Activated T-helper 1 cell treated with anti-CD3 and anti-CD28 coated beads, Interleukin-12 subunit alpha, Interleukin-12 subunit beta, Interleukin-2, Interleukin-4 antibody, amounts not matched to agents 30 ng/mL and 10 ng/mL and 1 ng/mL, durations not matched to agents 14 hours and 24 hours and 36 hours (primary cell): ENCODE measurements at regions of chr15 and their contacts with region 1.

Region 1: GRCh38 chr15:89087830-89088604 is at the start of gene ABHD2:
- DNase-seq: peak; percentile 98
- H3K4me3 Mint-ChIP-seq: no peak within 1 kb of the TSS
- H3K27ac Mint-ChIP-seq: no peak within 1 kb of the TSS
- H3K4me1 Mint-ChIP-seq: peaks cover 33% of the 10 kb centered on the region
- H3K27me3 Mint-ChIP-seq: no peaks in the 10 kb centered on the region
- total RNA-seq, gene ABHD2: 66.5 and 66.7 TPM in 2 replicates

Region 2: DNA sequence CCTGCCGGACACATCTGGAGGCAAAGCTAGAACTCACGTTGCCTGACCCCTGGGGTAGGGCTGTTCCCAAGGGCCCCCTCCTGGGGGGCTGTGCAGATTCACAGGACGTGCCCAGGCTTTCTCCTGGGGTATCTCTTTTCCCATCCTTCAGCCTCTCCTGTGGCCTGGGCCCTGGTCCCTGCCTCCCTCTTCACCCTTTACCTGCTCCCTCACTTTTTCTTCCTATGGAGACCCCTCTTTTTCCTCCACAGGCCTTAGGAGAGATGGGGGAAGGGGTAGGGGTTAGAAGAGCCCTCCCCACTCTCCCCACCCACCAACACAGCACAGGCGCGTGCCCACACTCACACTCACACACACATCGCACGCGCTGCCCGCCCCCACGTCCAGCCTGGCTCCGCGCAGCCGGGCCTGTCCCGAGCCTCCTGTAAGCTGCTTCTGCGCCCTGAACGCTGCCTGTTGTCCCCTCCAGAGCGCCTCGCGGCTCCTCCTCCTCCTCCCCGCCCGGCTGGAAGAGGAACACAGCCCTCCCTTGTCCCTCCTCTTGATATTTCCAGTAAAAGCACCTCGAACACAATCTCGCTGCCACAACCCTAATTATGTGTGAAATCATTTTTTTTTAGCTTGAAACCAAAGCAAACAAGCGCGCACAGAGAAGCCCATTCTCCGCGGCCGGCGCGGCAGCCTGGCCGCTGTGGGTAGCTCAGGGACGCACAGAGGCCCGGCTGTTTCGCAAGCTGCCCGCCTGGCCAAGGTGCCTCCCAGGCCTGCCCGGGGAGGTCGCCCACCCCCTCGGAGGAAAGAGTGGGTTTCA is 318.7 kb before region 1 on chr15:
- intact Hi-C with region 1: no loop called
- DNase-seq: no peak
- H3K4me3 Mint-ChIP-seq: no peak overlapping the region
- H3K27ac Mint-ChIP-seq: no peak overlapping the region
- H3K4me1 Mint-ChIP-seq: no peaks in the 10 kb centered on the region
- H3K27me3 Mint-ChIP-seq: peaks cover 21% of the 10 kb centered on the region

Region 3: DNA sequence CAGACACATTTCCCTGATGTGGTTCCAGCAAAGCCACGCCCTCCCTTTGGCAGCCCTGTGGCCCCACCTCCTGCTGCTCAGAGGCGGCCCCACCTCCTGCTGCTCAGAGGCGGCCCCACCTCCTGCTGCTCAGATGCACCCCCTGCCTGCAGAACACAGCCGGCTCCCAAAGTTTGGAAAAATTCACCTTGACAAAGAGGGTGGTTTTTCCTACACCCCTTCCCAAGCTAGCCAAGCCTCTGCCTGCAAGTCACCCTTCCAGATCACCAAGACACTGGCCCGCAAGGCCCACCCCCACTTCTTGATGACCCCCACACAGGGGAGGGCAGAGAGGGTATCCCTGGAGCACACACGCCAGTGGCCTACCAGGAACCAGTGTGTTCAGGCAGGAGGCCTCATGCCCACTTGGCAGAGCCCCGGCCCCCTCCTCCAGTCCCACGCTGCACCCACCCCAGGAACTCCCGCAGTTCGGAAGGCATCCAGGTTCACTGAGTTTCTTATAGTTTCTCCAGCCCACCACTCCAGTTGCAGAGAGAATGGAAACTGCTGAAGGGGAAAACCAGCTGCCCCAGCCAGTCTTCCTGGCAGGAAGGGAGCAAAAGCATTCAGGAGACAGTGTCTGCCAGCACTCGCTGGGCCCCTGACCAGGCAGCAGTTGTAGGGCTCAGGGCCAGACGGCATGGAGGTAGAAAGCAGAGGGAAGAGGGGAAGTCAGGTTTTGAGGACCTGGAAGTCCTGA is 190.4 kb before region 1 on chr15:
- intact Hi-C with region 1: loop called (anchors 2 kb)
- DNase-seq: peak; percentile 78
- H3K4me3 Mint-ChIP-seq: no peak overlapping the region
- H3K27ac Mint-ChIP-seq: no peak overlapping the region
- H3K4me1 Mint-ChIP-seq: peaks cover 35% of the 10 kb centered on the region
- H3K27me3 Mint-ChIP-seq: no peaks in the 10 kb centered on the region

Region 4: GRCh38 chr15:89057504-89058133 is 30.4 kb before region 1 on chr15:
- intact Hi-C with region 1: loop called (anchors 2 kb)
- DNase-seq: peak; percentile 68
- H3K4me3 Mint-ChIP-seq: no peak overlapping the region
- H3K27ac Mint-ChIP-seq: no peak overlapping the region
- H3K4me1 Mint-ChIP-seq: peaks cover 11% of the 10 kb centered on the region
- H3K27me3 Mint-ChIP-seq: peaks cover 12% of the 10 kb centered on the region

Region 5: GRCh38 chr15:89129123-89129815 is 41.3 kb after region 1 on chr15:
- intact Hi-C with region 1: loop called (anchors 1 kb)
- DNase-seq: peak; percentile 16
- H3K4me3 Mint-ChIP-seq: no peak overlapping the region
- H3K27ac Mint-ChIP-seq: no peak overlapping the region
- H3K4me1 Mint-ChIP-seq: peaks cover 19% of the 10 kb centered on the region
- H3K27me3 Mint-ChIP-seq: no peaks in the 10 kb centered on the region

Region 6: GRCh38 chr15:89167267-89168176 is 79.5 kb after region 1 on chr15:
- intact Hi-C with region 1: loop called (anchors 1 kb)
- DNase-seq: no peak
- H3K4me3 Mint-ChIP-seq: peak overlapping the region; percentile 65
- H3K27ac Mint-ChIP-seq: peak overlapping the region; percentile 90
- H3K4me1 Mint-ChIP-seq: peaks cover 31% of the 10 kb centered on the region
- H3K27me3 Mint-ChIP-seq: no peaks in the 10 kb centered on the region